ENCODE measurements at regions of chr1 and their contacts with region 1.

Region 1: DNA sequence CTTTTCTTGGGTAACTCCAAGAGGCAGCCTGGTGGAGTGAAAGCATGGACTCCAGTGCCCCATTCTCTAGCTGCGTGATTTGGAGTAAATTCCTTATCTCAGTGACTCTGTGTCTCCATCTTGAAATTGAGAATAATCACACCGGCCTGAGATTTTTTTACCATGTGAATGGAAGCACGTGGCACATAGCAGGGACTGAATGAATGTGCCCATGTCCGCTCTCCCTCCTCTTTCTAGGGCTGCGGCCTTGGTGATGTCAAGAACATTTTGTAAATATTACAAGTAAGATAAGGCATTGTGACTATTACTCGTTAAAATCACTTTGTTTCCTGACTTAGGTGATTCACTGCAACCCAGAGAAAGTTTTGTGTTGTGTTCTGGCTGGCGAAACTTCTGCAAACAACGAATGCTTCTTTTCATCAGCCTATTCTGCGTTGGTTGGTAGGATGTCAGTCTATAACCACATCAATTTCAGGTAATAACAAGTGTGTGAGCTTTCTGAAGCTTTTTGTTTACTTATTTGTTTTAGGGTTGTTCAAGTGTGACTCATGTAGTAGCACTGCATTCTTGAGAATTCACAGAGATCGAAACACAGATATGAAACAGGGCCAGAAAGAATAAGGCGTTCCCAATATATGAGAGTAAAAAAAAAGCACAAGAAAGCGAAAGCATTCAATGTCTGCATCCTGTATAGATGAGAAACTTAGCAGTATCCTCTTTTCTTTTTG is 135.7 kb upstream of the SLC45A1 start:
- DNase-seq: peak; percentile 92
- H3K4me3 ChIP-seq: peak overlapping the region in 1 of 3 experiments; percentile 39
- H3K27ac ChIP-seq: peak overlapping the region; percentile 88
- H3K4me1 ChIP-seq: peaks cover 21% of the 10 kb centered on the region
- H3K27me3 ChIP-seq: no peaks in the 10 kb centered on the region
- CTCF ChIP-seq: no peak
- POLR2A ChIP-seq: peak; percentile 38

Region 2: GRCh38 chr1:8047681-8048445 is 134.3 kb before region 1 on chr1:
- CTCF ChIA-PET with region 1: no interaction called
- POLR2A ChIA-PET with region 1: no interaction called
- dilution Hi-C with region 1: no loop called
- intact Hi-C with region 1: loop called (anchors 5 kb)
- DNase-seq: peak; percentile 90
- H3K4me3 ChIP-seq: no peak overlapping the region
- H3K27ac ChIP-seq: peak overlapping the region; percentile 81
- H3K4me1 ChIP-seq: peaks cover 29% of the 10 kb centered on the region
- H3K27me3 ChIP-seq: no peaks in the 10 kb centered on the region
- CTCF ChIP-seq: no peak
- POLR2A ChIP-seq: no peak

Region 3: DNA sequence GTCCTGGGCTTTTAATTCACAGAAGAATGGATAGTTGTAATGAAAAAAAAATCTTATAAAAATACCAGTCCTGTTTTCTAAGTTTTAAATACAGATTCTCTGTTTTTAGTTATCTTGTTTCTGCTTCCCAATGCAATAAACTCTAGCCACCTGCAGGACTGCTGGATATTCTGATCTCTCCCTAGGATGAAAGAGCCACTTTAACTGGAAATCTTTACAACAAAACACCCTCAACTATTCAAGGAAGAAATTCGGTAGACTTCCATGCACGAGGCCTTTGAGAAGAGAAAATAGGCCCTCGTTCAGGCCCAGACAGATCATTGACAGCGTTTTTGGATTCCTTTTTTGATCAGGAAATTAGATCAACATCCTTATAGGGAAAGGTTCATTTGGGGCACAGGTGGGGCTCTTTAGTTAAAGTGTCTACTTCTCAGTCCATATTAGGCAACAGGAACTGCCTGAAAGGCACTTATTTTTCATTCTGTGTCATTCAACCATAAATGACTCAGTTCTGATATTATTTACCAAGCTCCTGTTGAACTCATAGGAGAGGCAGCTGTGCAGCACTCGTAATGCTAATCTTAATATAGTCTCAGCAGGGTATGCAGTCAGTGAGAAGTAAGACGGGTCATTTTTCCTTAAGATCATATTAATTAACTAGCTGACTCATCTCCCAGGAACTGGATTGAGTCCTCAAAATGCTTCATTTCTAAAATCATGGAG is 85.0 kb before region 1 on chr1:
- CTCF ChIA-PET with region 1: interaction called, 3 read pairs
- POLR2A ChIA-PET with region 1: no interaction called
- dilution Hi-C with region 1: no loop called
- intact Hi-C with region 1: loop called (anchors 1 kb)
- DNase-seq: peak; percentile 94
- H3K4me3 ChIP-seq: peak overlapping the region in 1 of 3 experiments; percentile 20
- H3K27ac ChIP-seq: peak overlapping the region; percentile 98
- H3K4me1 ChIP-seq: peaks cover 49% of the 10 kb centered on the region
- H3K27me3 ChIP-seq: no peaks in the 10 kb centered on the region
- CTCF ChIP-seq: no peak
- POLR2A ChIP-seq: no peak

Region 4: DNA sequence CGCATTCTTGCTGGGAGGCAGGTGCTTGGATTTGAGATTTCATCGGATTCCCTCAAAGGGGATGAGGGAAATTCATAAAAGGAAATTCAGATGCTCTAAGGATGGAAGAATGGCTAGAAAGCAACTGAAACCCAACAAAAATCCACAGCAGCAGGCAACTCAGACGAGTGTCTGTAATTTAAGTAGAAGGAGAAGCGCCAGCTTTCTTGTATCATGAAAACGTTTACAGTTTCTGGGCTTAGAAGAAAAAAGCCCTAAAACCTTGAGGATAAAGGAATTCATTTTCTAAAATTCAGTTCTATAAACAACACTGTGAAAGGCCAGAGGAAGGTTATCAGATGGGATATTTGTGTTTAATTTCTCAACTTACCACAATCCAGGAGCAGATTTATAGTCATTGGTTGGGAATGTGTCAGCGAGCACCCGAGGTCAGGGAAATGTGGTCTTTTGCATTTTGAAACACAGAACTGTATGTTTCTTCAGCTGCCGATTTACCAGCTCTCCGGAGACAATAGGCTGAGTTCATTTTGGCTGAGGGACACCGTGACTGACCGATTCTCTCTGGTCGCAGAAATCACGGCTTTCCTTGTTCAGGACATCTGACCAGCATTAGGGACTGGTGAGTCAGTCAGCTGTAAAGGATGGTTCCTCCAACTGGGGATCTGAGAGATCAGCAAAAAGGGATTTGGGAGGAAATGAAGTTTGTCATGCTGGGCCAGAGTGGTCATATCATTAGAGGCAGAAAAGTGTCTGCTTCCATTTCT is 44.5 kb before region 1 on chr1:
- CTCF ChIA-PET with region 1: no interaction called
- POLR2A ChIA-PET with region 1: no interaction called
- dilution Hi-C with region 1: no loop called
- intact Hi-C with region 1: loop called (anchors 1 kb)
- DNase-seq: peak; percentile 97
- H3K4me3 ChIP-seq: no peak overlapping the region
- H3K27ac ChIP-seq: peak overlapping the region; percentile 81
- H3K4me1 ChIP-seq: peaks cover 39% of the 10 kb centered on the region
- H3K27me3 ChIP-seq: no peaks in the 10 kb centered on the region
- CTCF ChIP-seq: no peak
- POLR2A ChIP-seq: no peak

Region 5: DNA sequence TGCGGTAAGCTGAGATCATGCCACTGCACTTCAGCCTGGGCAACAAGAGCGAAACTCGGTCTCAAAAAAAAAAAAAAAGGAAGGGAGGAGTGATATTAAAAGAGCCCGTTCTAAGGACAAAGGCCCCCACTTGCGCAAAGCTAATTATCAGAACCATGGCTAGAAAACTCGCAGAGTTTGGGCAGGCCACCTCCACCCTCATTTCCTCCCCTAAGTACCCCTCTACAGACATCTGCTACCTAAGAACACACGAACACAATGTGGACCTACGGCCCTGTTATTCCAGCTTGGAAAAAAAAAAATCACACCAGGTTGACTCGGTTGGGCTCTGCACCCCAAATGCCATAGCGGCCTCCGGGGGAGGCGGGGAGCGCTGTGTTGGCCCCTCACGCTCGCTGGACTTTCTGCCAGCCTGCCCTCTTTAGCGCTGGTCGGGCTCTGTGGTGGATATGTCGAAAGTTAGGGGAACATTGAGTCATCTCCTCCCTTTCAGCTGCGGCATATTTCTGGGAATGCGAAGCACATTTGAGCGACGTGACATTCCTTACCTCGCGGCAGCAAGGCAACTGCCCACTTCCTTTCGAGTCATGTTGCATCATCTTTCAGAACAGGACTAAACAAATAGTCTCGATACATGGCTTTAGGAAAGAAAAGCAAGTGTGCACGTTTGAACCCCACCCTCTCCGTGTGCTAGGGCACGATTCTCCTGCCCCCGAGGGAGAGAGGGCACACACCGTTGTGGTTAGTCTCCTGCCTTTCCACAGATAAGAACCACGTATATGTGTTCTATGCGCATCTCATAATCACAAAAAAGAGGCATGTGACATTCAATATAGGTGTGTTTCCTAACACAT is 29.6 kb after region 1 on chr1:
- CTCF ChIA-PET with region 1: no interaction called
- POLR2A ChIA-PET with region 1: no interaction called
- dilution Hi-C with region 1: no loop called
- intact Hi-C with region 1: loop called (anchors 1 kb)
- DNase-seq: peak; percentile 92
- H3K4me3 ChIP-seq: no peak overlapping the region
- H3K27ac ChIP-seq: peak overlapping the region; percentile 85
- H3K4me1 ChIP-seq: peaks cover 17% of the 10 kb centered on the region
- H3K27me3 ChIP-seq: no peaks in the 10 kb centered on the region
- CTCF ChIP-seq: peak in 1 of 2 donors; percentile 14
- POLR2A ChIP-seq: peak; percentile 32

Region 6: DNA sequence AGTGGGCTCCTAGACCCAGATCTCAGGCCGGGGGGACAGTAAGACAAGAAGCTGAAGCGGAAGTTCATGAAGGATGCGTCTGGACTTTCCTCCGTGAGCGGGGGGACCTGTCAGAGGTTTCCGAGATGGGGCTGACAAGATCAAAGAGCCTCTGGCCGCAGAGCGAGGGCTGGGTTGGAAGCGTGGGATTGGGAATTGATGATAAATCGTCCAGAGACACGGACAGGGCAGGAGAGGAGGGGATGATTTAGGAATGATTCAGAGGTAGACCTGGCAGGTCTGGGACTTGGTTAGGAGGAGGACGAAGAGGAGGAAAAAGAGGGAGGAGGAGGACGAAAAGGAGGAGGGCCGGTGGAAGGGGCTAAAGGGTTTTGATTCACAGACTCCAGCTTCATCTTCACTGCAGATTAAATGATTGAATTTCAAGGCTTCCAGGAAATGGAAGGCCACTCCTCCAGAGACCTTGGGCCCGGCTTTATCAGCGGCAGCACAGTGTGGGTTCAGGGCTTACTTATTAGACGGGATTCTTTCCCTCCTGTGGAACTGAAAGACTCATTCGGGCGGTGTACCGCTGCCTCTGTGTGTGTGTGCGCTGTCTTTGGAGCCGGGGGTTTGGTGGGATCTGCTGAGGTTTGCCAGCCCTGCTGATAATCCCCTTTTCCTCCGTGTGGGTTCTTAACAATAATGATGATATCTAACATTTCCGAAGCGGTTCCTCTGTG is 50.0 kb after region 1 on chr1:
- CTCF ChIA-PET with region 1: no interaction called
- POLR2A ChIA-PET with region 1: no interaction called
- dilution Hi-C with region 1: no loop called
- intact Hi-C with region 1: no loop called
- DNase-seq: no peak
- H3K4me3 ChIP-seq: no peak overlapping the region
- H3K27ac ChIP-seq: no peak overlapping the region
- H3K4me1 ChIP-seq: no peaks in the 10 kb centered on the region
- H3K27me3 ChIP-seq: no peaks in the 10 kb centered on the region
- CTCF ChIP-seq: no peak
- POLR2A ChIP-seq: no peak